ENCODE measurements at regions of chr11 and their contacts with region 1.

Region 1: DNA sequence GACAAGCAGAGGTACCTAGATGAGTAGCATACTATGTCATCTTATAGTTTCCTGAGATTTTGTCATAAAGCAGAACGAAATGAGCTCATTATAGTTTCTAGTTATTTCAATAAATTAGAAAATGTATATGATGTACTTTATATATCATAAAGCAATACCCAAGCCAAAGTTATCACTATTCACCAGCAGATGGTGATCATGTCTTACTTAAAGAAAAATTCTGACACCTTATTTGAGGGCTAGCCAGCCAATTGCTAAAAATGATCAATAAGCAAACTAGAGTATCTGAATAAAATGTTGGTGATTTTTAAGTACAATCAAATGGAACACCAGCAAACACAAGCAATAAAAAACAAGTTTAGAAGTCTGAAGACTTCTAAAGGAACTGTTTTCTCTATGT is 44.1 kb downstream of the RSF1 start:
- DNase-seq: peak in 3 of 14 experiments; percentile 45 to 53 (median 49)
- ATAC-seq: no peak
- H3K4me3 ChIP-seq: no peak overlapping the region
- H3K4me3 Mint-ChIP-seq: no peak overlapping the region
- H3K27ac ChIP-seq: no peak overlapping the region
- H3K27ac Mint-ChIP-seq: no peak overlapping the region
- H3K4me1 ChIP-seq: peaks cover 4% of the 10 kb centered on the region
- H3K4me1 Mint-ChIP-seq: peaks cover 79% of the 10 kb centered on the region
- H3K27me3 ChIP-seq: no peaks in the 10 kb centered on the region
- H3K27me3 Mint-ChIP-seq: no peaks in the 10 kb centered on the region
- CTCF ChIP-seq: no peak

Region 2: DNA sequence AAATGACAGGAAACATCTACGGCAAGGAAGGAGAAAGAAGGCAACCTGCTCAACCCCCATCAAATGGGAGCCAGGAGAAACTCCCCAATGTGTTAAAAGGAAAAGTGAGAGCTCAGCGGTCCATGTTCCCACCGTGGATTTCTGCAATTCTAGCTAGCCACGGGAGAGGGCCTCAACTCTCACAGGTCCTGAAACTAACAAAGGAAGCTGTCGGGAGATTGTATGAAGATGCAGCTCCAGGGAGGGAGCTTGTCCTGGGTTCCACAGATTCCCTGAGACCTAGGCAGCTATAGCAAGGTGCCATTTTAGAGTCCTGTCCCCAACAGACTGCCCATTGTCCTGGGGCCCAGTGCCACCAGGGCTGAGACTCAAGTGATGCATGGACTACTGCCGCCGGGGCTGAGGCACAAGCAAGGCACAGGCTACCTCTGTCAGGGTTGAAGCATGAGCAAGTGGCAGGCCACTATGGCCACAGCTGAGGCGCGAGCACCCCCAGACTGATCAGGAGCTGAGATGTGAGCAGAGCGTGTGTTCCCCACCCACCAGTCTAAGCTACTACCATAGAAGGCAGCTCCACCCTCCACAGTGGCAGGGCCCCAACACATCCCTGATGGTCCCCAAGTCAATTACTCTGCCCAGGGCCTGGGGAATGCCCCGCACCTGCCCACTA is 12.7 kb after region 1 on chr11:
- CTCF ChIA-PET with region 1: no interaction called
- POLR2A ChIA-PET with region 1: no interaction called
- intact Hi-C with region 1: no loop called
- DNase-seq: no peak
- ATAC-seq: no peak
- H3K4me3 ChIP-seq: no peak overlapping the region
- H3K4me3 Mint-ChIP-seq: no peak overlapping the region
- H3K27ac ChIP-seq: no peak overlapping the region
- H3K27ac Mint-ChIP-seq: peak overlapping the region; percentile 39
- H3K4me1 ChIP-seq: peaks cover 20% of the 10 kb centered on the region
- H3K4me1 Mint-ChIP-seq: peaks cover 77% of the 10 kb centered on the region
- H3K27me3 ChIP-seq: no peaks in the 10 kb centered on the region
- H3K27me3 Mint-ChIP-seq: no peaks in the 10 kb centered on the region
- CTCF ChIP-seq: no peak

Region 3: GRCh38 chr11:78000193-78000592 is 223.7 kb after region 1 on chr11:
- CTCF ChIA-PET with region 1: no interaction called
- POLR2A ChIA-PET with region 1: no interaction called
- intact Hi-C with region 1: loop called (anchors 1 kb)
- DNase-seq: peak in 12 of 14 experiments; percentile 10 to 74 (median 26)
- ATAC-seq: peak; percentile 77
- H3K4me3 ChIP-seq: no peak overlapping the region
- H3K4me3 Mint-ChIP-seq: no peak overlapping the region
- H3K27ac ChIP-seq: no peak overlapping the region
- H3K27ac Mint-ChIP-seq: no peak overlapping the region
- H3K4me1 ChIP-seq: peaks cover 9% of the 10 kb centered on the region
- H3K4me1 Mint-ChIP-seq: peaks cover 2% of the 10 kb centered on the region
- H3K27me3 ChIP-seq: no peaks in the 10 kb centered on the region
- H3K27me3 Mint-ChIP-seq: no peaks in the 10 kb centered on the region
- CTCF ChIP-seq: peak; percentile 63

Region 4: DNA sequence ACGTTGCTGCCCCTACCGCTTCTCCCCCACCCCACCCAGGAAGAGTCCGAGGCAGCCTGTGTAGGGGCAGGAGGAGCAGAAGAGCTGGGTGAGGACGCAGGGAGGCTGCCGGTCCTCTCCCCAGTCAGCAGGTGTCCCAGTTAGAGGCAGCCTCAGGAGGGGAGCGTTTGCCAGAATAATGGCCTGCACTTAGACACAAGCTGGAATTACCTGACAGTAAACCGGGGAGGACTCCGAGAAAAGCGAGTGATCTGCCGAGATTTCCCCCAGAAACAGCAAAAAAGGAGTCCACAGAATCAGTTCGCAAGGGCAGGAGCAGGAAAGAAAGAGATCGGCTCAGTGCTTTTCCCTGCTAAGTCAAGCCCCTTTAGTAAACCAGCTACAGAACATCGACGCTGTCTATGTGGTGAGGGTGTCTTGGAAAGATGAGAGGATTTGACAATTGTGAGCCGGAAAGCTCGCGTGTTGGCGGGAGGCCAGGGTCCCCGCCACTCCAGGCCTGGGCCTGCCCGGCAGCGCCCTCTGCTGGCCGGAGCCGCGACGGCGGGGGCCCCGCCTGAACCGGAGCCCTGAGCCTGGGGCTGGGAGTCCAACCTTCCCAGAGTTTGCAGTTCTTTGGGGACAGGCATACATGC is 269.5 kb after region 1 on chr11:
- CTCF ChIA-PET with region 1: no interaction called
- POLR2A ChIA-PET with region 1: no interaction called
- intact Hi-C with region 1: loop called (anchors 1 to 5 kb)
- DNase-seq: peak; percentile 58 to 87 (median 78)
- ATAC-seq: peak; percentile 97
- H3K4me3 ChIP-seq: peak overlapping the region; percentile 37
- H3K4me3 Mint-ChIP-seq: peak overlapping the region; percentile 73
- H3K27ac ChIP-seq: no peak overlapping the region
- H3K27ac Mint-ChIP-seq: no peak overlapping the region
- H3K4me1 ChIP-seq: peaks cover 10% of the 10 kb centered on the region
- H3K4me1 Mint-ChIP-seq: peaks cover 12% of the 10 kb centered on the region
- H3K27me3 ChIP-seq: no peaks in the 10 kb centered on the region
- H3K27me3 Mint-ChIP-seq: no peaks in the 10 kb centered on the region
- CTCF ChIP-seq: peak; percentile 90

Measured in CD4-positive, alpha-beta T cell (primary cell).